IMR-90 (cell line): ENCODE measurements at regions of chr17 and their contacts with region 1.

Region 1: DNA sequence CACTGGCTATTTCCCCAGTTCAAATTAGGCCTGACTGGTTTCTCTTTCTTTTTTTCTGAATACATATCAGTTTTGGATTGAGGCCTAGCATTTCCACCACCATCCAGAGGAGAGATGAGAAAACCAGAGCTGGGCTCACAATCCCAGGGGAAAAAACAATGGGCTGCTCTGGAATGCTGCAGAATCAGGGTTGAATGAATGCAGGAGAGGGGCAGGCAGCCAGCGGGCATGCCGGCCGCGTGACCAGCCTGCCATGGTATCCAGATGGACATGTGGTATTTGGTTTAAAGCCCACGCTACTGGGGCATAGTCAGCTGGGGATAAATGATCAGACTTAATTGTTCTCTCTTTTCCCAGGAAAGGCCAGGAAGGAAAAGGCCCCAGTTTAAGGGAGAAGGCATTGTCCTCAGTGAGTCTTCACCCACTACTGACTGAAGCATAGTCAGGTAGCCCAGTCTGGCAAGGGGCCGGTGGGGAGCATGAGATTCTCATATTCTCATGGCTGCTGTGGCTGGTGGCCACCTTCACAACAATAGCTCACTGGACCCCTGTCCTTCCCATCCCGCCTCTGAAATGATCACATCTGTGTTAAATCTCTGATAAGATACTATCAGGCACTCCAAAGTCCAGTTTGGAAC is 38.7 kb upstream of the RHOT1 start:
- DNase-seq: no peak
- ATAC-seq: no peak
- H3K4me3 ChIP-seq: no peak overlapping the region
- H3K27ac ChIP-seq: no peak overlapping the region
- H3K4me1 ChIP-seq: no peaks in the 10 kb centered on the region
- H3K27me3 ChIP-seq: peaks cover 4% of the 10 kb centered on the region
- CTCF ChIP-seq: no peak
- POLR2A ChIP-seq: no peak
- RAD21 ChIP-seq: no peak

Region 2: GRCh38 chr17:32127158-32127897 is 23.7 kb after region 1 on chr17:
- CTCF ChIA-PET with region 1: no interaction called
- POLR2A ChIA-PET with region 1: no interaction called
- dilution Hi-C with region 1: no loop called
- in situ Hi-C with region 1: no loop called
- intact Hi-C with region 1: loop called (anchors 1 kb)
- DNase-seq: peak; percentile 54
- ATAC-seq: peak; percentile 98
- H3K4me3 ChIP-seq: peak overlapping the region; percentile 56
- H3K27ac ChIP-seq: peak overlapping the region; percentile 59
- H3K4me1 ChIP-seq: 0 out of 2 replicates have a peak, but pooled peaks cover 2% of the 10 kb centered on the region
- H3K27me3 ChIP-seq: no peaks in the 10 kb centered on the region
- CTCF ChIP-seq: no peak
- POLR2A ChIP-seq: no peak; the same call in 1 of the 2 replicates
- RAD21 ChIP-seq: no peak